Activated CD8-positive, alpha-beta T cell treated with anti-CD3 and anti-CD28 coated beads for 36 hours (primary cell): ENCODE measurements at regions of chr16 and their contacts with region 1.

Region 1: GRCh38 chr16:15704545-15704987 is 54.5 kb downstream of the NDE1 start:
- DNase-seq: peak; percentile 87
- ATAC-seq: peak; percentile 85
- H3K4me3 Mint-ChIP-seq: no peak overlapping the region
- H3K27ac Mint-ChIP-seq: peak overlapping the region; percentile 25
- H3K4me1 Mint-ChIP-seq: peaks cover 15% of the 10 kb centered on the region
- H3K27me3 Mint-ChIP-seq: no peaks in the 10 kb centered on the region
- CTCF ChIP-seq: peak; percentile 82

Region 2: DNA sequence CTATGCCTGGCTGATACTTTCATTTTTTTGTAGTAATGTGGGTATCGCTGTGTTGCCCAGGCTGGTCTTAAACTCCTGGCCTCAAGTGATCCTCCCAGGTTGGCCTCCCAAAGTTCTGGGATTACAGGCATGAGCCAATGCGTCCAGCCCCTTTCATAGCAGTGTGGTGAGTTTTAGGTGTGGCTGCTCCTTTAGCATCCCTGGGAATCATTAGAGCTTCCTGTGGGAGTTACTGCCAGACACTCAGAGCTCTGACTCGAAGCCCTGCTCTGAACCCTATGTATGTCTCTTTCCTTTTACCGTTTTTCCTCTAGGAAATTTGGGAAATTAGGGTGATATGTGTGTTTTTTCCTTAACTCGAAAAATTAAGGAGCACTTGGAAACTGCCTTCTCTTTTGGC is 10.1 kb before region 1 on chr16:
- CTCF ChIA-PET with region 1: interaction called, 19 read pairs
- POLR2A ChIA-PET with region 1: interaction called, 3 read pairs
- intact Hi-C with region 1: no loop called
- DNase-seq: no peak
- ATAC-seq: no peak
- H3K4me3 Mint-ChIP-seq: no peak overlapping the region
- H3K27ac Mint-ChIP-seq: no peak overlapping the region
- H3K4me1 Mint-ChIP-seq: no peaks in the 10 kb centered on the region
- H3K27me3 Mint-ChIP-seq: no peaks in the 10 kb centered on the region
- CTCF ChIP-seq: no peak